WTC11 (cell line): ENCODE measurements at regions of chrX and their contacts with region 1.

Region 1: GRCh38 chrX:46978341-46979291 is 66.4 kb downstream of the JADE3 start:
- DNase-seq: peak; percentile 80
- ATAC-seq: peak; percentile 80
- H3K4me3 Mint-ChIP-seq: no peak overlapping the region
- H3K27ac Mint-ChIP-seq: peak overlapping the region; percentile 28
- H3K4me1 Mint-ChIP-seq: peaks cover 55% of the 10 kb centered on the region
- H3K27me3 Mint-ChIP-seq: no peaks in the 10 kb centered on the region
- CTCF ChIP-seq: peak; percentile 54

Region 2: DNA sequence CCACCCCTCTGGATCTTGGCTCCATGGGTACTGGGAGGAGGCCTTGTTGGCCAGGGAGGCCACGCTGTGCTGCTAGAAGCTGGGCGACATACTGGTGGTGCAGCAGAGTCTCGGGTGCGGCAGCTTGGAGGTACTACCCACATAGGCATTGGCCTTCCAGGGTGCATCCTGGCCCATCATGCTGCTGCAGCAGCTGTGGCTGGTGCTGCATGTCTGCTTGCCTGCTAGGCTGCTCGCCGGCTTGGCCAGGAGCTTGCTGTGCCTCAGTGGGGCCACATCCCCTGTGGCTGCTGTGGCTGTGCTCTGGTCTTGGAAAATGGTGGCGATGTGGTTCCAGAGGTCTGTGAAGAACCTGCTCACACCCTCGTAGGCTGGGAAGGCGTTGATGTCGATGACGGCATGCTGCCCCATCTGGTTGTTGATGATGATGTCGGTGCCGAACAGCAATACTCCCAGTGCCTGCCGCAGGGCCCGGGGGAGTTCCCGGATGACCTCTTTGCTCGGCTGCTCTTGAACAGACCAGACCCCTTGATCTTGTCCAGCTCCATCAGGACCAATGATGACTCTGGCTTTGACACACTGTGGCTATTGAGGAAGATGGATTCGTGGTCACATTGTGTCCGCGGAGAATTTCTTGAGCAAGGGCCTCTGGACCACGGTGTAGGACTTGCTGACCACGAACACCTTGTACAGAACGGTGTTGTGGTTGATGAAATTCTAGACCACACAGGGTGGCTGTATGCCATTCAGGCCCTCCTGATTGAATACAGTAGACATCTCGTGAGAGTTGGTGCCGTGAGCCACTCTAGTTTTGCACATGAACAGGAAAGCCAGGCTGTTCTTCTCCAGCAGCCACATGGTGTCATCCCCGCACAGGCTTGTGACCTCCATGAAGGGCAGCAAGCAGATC is 178.2 kb after region 1 on chrX:
- CTCF ChIA-PET with region 1: no interaction called
- POLR2A ChIA-PET with region 1: interaction called, 13 read pairs
- DNase-seq: no peak
- ATAC-seq: no peak
- H3K4me3 Mint-ChIP-seq: no peak overlapping the region
- H3K27ac Mint-ChIP-seq: no peak overlapping the region
- H3K4me1 Mint-ChIP-seq: no peaks in the 10 kb centered on the region
- H3K27me3 Mint-ChIP-seq: no peaks in the 10 kb centered on the region
- CTCF ChIP-seq: no peak